Ovary (tissue), 10 donors: ENCODE measurements at regions of chr2 and their contacts with region 1.

Region 1: DNA sequence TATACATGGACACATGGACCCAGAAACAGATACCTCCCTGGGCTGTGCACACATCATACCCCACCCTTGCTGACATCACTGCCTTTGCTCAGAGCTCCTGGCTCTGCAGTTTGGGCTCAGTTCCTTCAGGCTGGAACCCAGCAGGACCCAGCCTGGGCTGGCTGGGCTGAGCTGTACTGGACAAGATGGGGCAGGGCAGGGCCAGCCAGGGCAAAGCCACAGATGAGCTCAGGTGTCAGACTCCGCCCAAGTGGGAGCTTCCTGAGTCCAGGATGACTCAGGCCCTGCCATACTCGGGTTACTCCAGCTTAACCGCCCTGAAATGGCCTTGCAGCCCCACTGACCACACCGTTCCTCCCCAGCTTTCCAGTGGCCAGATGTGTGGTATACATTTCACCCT is 284.9 kb downstream of the OSR1 start:
- DNase-seq: no peak
- H3K4me3 ChIP-seq: no peak overlapping the region
- H3K27ac ChIP-seq: no peak overlapping the region
- H3K4me1 ChIP-seq: peaks cover 2% of the 10 kb centered on the region
- H3K27me3 ChIP-seq: no peaks in the 10 kb centered on the region
- CTCF ChIP-seq: no peak
- EP300 ChIP-seq: no peak
- POLR2A ChIP-seq: no peak

Region 2: DNA sequence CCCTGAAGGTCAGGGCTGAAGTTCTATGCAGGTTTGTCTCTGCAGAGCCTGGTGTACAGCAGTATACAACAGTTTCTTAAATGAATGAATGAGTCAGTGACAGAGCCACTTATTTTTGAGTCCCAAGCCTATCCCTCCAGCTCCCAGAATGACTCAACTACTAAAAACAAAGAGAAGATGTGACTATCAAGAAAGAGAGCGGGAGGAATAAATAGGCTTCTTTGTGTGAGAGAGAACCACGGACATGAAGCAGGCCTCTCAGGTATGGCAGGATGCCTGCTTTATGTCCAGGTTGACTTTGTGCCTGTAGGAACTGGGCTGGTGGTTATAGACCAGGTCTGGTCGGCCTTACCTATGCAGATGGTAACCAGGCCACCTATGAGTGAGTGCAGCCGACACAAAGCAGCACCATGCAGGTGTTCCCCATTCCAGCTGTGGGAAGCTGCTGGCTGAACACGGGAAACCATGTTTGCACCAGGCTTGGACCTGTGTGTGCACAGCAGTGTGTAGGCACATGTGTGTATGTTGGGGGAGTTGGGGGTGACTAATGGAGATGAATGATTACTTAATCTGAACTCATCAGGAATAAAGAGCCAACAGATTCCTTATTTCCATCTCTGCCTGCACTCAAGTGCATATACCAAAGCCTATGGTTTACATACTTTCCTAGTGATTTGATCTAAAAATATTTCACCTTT is 114.0 kb after region 1 on chr2:
- intact Hi-C with region 1: loop called in 1 of 4 experiments (anchors 10 kb)
- DNase-seq: no peak
- H3K4me3 ChIP-seq: no peak overlapping the region
- H3K27ac ChIP-seq: no peak overlapping the region
- H3K4me1 ChIP-seq: no peaks in the 10 kb centered on the region
- H3K27me3 ChIP-seq: no peaks in the 10 kb centered on the region
- CTCF ChIP-seq: no peak
- EP300 ChIP-seq: no peak
- POLR2A ChIP-seq: no peak